ENCODE measurements at regions of chr5 and their contacts with region 1.

Region 1: GRCh38 chr5:95846554-95847260 is 24.2 kb upstream of the GLRX start:
- DNase-seq: peak; percentile 72
- H3K4me3 Mint-ChIP-seq: no peak overlapping the region
- H3K27ac Mint-ChIP-seq: no peak overlapping the region
- H3K4me1 Mint-ChIP-seq: peaks cover 38% of the 10 kb centered on the region
- H3K27me3 Mint-ChIP-seq: peaks cover 10% of the 10 kb centered on the region

Region 2: GRCh38 chr5:95664204-95664786 is 182.4 kb before region 1 on chr5:
- CTCF ChIA-PET with region 1: interaction called, 14 read pairs
- POLR2A ChIA-PET with region 1: no interaction called
- DNase-seq: peak; percentile 23
- H3K4me3 Mint-ChIP-seq: no peak overlapping the region
- H3K27ac Mint-ChIP-seq: no peak overlapping the region
- H3K4me1 Mint-ChIP-seq: no peaks in the 10 kb centered on the region
- H3K27me3 Mint-ChIP-seq: peaks cover 3% of the 10 kb centered on the region

Region 3: DNA sequence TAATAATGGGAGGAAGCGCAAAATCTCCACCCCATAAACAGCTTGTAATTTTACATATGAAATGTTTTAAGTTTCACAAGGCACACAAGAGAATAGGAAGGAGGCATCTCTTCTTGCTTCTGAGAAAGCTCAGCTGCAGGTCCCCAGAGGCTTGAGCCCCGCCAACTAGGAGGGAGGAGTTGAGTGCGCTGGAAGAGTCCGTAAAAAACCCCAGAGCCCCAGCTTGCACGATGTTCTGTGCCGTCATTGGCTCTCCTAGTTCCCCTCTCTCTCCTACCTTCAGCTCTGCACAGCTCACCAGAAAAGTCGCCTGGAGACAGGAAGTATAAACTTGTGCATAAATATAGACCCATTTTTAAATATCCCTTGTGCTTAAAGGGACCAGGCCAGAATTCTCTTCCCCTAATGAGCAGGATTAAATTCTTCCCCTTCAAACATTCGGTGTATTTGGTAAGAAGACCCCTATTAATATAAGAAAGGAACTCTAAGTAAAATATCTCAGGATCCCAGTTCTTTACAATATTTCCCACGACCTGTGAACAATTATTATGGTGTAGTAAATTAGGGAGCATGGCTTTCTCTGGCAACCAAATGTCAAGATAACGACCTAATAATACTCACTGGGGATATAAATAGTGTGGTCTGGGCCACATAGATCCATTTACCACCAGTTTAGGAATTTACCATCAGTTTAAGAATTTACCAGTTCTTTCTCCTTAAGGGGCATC is 37.9 kb before region 1 on chr5:
- CTCF ChIA-PET with region 1: interaction called, 23 read pairs
- POLR2A ChIA-PET with region 1: interaction called, 4 read pairs
- DNase-seq: peak; percentile 81
- H3K4me3 Mint-ChIP-seq: peak overlapping the region; percentile 50
- H3K27ac Mint-ChIP-seq: peak overlapping the region; percentile 78
- H3K4me1 Mint-ChIP-seq: peaks cover 60% of the 10 kb centered on the region
- H3K27me3 Mint-ChIP-seq: no peaks in the 10 kb centered on the region

Region 4: GRCh38 chr5:95822542-95823181 is 24.0 kb before region 1 on chr5 and contains the start of gene GLRX:
- CTCF ChIA-PET with region 1: interaction called, 15 read pairs
- POLR2A ChIA-PET with region 1: interaction called, 7 read pairs
- DNase-seq: peak; percentile 72
- H3K4me3 Mint-ChIP-seq: peak within 1 kb of the TSS; percentile 91
- H3K27ac Mint-ChIP-seq: peak within 1 kb of the TSS; percentile 88
- H3K4me1 Mint-ChIP-seq: peaks cover 71% of the 10 kb centered on the region
- H3K27me3 Mint-ChIP-seq: no peaks in the 10 kb centered on the region
- total RNA-seq, gene GLRX: 71.6 to 72.5 TPM

Region 5: DNA sequence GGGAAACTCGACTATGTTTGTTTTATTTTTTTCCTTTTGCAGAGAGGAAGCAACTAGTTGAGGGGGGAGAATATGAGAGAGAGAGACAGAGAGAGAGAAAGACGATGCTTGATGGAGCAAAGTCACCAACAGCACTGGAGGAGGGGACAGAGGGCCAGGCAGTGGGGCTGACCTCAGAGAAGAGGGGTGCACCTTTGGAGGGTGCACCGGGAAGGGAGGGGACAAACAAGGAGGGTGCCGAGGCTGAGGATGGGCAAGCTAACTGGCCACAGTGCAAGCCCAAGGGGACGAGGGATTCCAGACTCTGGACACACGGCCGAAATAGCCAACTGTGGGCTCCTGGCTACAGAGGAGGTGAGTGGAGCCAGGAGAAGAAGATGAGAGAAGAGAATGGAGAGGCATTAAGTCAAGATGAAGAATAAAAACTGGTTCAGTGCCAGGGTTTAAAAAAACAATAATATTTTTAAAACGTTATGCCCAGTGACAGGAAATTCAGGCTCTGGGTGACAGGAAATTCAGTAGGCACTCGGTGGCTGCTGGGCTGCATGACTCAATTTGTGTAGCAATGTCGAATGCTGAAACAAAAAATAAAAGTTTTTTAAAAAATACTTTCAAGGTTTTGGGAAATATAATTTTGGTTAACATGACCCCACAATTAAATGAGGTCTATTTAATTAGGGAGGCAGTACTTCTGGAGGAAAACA is 10.9 kb before region 1 on chr5:
- CTCF ChIA-PET with region 1: interaction called, 10 read pairs
- POLR2A ChIA-PET with region 1: interaction called, 4 read pairs
- DNase-seq: no peak
- H3K4me3 Mint-ChIP-seq: peak overlapping the region; percentile 83
- H3K27ac Mint-ChIP-seq: peak overlapping the region; percentile 89
- H3K4me1 Mint-ChIP-seq: peaks cover 44% of the 10 kb centered on the region
- H3K27me3 Mint-ChIP-seq: no peaks in the 10 kb centered on the region

Region 6: GRCh38 chr5:96868603-96869371 is 1022.1 kb after region 1 on chr5:
- CTCF ChIA-PET with region 1: no interaction called
- POLR2A ChIA-PET with region 1: no interaction called
- DNase-seq: no peak
- H3K4me3 Mint-ChIP-seq: no peak overlapping the region
- H3K27ac Mint-ChIP-seq: peak overlapping the region; percentile 82
- H3K4me1 Mint-ChIP-seq: peaks cover 54% of the 10 kb centered on the region
- H3K27me3 Mint-ChIP-seq: no peaks in the 10 kb centered on the region

Measured in activated CD4-positive, alpha-beta memory T cell treated with anti-CD3 and anti-CD28 coated beads, Interleukin-2, amount 10 ng/mL, durations not matched to agents 7 days and 5 days (primary cell).